ENCODE measurements at regions of chr3 and their contacts with region 1.

Region 1: GRCh38 chr3:128969993-128970739 is 23.7 kb downstream of the CFAP92 start:
- DNase-seq: peak; percentile 38 to 70 (median 57)
- H3K4me3 ChIP-seq: no peak overlapping the region
- H3K4me3 Mint-ChIP-seq: no peak overlapping the region
- H3K27ac ChIP-seq: no peak overlapping the region
- H3K27ac Mint-ChIP-seq: no peak overlapping the region
- H3K4me1 ChIP-seq: no peaks in the 10 kb centered on the region
- H3K4me1 Mint-ChIP-seq: peaks cover 5 to 6% (median 6%) of the 10 kb centered on the region in 3 donors
- H3K27me3 ChIP-seq: no peaks in the 10 kb centered on the region
- H3K27me3 Mint-ChIP-seq: no peaks in the 10 kb centered on the region

Region 2: DNA sequence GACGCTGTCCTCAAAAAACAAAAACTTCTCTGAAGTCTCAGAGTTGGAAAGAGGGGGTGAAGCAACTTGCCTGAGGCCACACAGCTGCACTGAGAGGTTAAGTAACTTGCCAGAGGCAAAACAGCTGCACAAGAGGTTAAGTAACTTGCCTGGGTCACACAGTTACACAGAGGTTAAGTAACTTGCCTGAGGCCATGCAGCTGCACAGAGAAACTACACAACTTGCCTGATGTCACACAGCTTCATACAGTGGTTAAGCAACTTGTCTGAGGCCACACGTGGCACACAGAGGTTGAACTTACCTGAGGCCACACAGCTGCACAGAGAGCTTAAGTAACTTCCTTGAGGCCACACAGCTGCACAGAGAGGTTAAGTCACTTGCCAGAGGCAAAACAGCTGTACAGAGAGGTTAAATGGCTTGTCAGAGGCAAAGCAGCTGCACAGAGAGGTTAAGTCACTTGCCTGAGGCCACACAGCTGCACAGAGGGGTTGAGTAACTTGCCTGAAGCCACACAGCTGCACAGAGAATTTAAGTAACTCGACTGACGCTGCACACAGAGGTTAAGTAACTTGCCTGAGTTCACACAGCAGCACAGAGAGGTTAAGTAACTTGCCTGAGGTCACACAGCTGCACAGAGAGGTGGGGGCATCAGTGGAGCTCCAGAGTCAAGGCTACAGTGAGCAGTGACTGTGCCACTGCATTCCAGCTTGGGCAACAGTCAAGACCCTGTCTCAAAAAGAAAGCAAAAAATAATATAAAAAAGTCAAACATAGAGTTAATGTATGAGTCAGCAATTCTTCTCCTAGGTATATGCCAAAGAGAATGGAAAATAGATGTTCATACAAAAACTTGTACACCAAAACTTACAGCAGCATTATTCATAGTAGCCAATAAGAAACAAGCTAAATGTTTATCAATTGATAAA is 102.7 kb before region 1 on chr3:
- CTCF ChIA-PET with region 1: no interaction called
- POLR2A ChIA-PET with region 1: no interaction called
- DNase-seq: no peak
- H3K4me3 ChIP-seq: no peak overlapping the region
- H3K4me3 Mint-ChIP-seq: no peak overlapping the region
- H3K27ac ChIP-seq: no peak overlapping the region
- H3K27ac Mint-ChIP-seq: no peak overlapping the region
- H3K4me1 ChIP-seq: no peaks in the 10 kb centered on the region
- H3K4me1 Mint-ChIP-seq: no peaks in the 10 kb centered on the region
- H3K27me3 ChIP-seq: no peaks in the 10 kb centered on the region
- H3K27me3 Mint-ChIP-seq: peaks cover 0 to 2% of the 10 kb centered on the region in 2 donors

Region 3: GRCh38 chr3:128993461-128994173 is 23.5 kb after region 1 on chr3 and contains the start of gene CFAP92:
- CTCF ChIA-PET with region 1: interaction called, 14 read pairs
- POLR2A ChIA-PET with region 1: no interaction called
- DNase-seq: peak; percentile 83 to 94 (median 89)
- H3K4me3 ChIP-seq: peak within 1 kb of the TSS; percentile 53
- H3K4me3 Mint-ChIP-seq: peak within 1 kb of the TSS; percentile 66 to 83 (median 77)
- H3K27ac ChIP-seq: no peak within 1 kb of the TSS
- H3K27ac Mint-ChIP-seq: peak within 1 kb of the TSS; percentile 50 to 96 (median 78)
- H3K4me1 ChIP-seq: peaks cover 23% of the 10 kb centered on the region
- H3K4me1 Mint-ChIP-seq: peaks cover 8 to 16% (median 9%) of the 10 kb centered on the region in 3 donors
- H3K27me3 ChIP-seq: no peaks in the 10 kb centered on the region
- H3K27me3 Mint-ChIP-seq: peaks cover 2 to 5% of the 10 kb centered on the region in 2 donors
- total RNA-seq, gene CFAP92: 0.13 TPM in 1 of 2 experiments, not detected in the other

Region 4: GRCh38 chr3:129016356-129016719 is 46.2 kb after region 1 on chr3:
- CTCF ChIA-PET with region 1: interaction called, 67 read pairs
- POLR2A ChIA-PET with region 1: interaction called, 6 read pairs
- DNase-seq: peak; percentile 49 to 80 (median 66)
- H3K4me3 ChIP-seq: peak overlapping the region; percentile 60
- H3K4me3 Mint-ChIP-seq: peak overlapping the region; percentile 66 to 85 (median 77)
- H3K27ac ChIP-seq: peak overlapping the region; percentile 57
- H3K27ac Mint-ChIP-seq: peak overlapping the region; percentile 82 to 100 (median 94)
- H3K4me1 ChIP-seq: peaks cover 40% of the 10 kb centered on the region
- H3K4me1 Mint-ChIP-seq: peaks cover 42 to 50% (median 48%) of the 10 kb centered on the region in 3 donors
- H3K27me3 ChIP-seq: no peaks in the 10 kb centered on the region
- H3K27me3 Mint-ChIP-seq: no peaks in the 10 kb centered on the region

Region 5: GRCh38 chr3:129052675-129053074 is 82.5 kb after region 1 on chr3:
- CTCF ChIA-PET with region 1: interaction called, 52 read pairs
- POLR2A ChIA-PET with region 1: no interaction called
- DNase-seq: no peak
- H3K4me3 ChIP-seq: no peak overlapping the region
- H3K4me3 Mint-ChIP-seq: peak overlapping the region in 1 of 7 donors; percentile 48
- H3K27ac ChIP-seq: no peak overlapping the region
- H3K27ac Mint-ChIP-seq: no peak overlapping the region
- H3K4me1 ChIP-seq: peaks cover 5% of the 10 kb centered on the region
- H3K4me1 Mint-ChIP-seq: peaks cover 5 to 8% (median 7%) of the 10 kb centered on the region in 3 donors
- H3K27me3 ChIP-seq: no peaks in the 10 kb centered on the region
- H3K27me3 Mint-ChIP-seq: peaks cover 0 to 5% of the 10 kb centered on the region in 2 donors

Region 6: GRCh38 chr3:129160891-129161859 is 191.0 kb after region 1 on chr3 and contains the start of gene ISY1:
- CTCF ChIA-PET with region 1: interaction called, 15 read pairs
- POLR2A ChIA-PET with region 1: no interaction called
- DNase-seq: peak; percentile 80 to 93 (median 91)
- H3K4me3 ChIP-seq: peak within 1 kb of the TSS; percentile 98
- H3K4me3 Mint-ChIP-seq: peak within 1 kb of the TSS; percentile 95 to 99 (median 98)
- H3K27ac ChIP-seq: peak within 1 kb of the TSS; percentile 95
- H3K27ac Mint-ChIP-seq: peak within 1 kb of the TSS; percentile 97 to 100 (median 99)
- H3K4me1 ChIP-seq: peaks cover 21% of the 10 kb centered on the region
- H3K4me1 Mint-ChIP-seq: peaks cover 31 to 53% (median 42%) of the 10 kb centered on the region in 3 donors
- H3K27me3 ChIP-seq: no peaks in the 10 kb centered on the region
- H3K27me3 Mint-ChIP-seq: peaks cover 0 to 4% of the 10 kb centered on the region in 2 donors
- total RNA-seq, gene ISY1: 84.6 to 94.7 TPM

Region 7: GRCh38 chr3:129249276-129250065 is 279.3 kb after region 1 on chr3 and contains the start of gene COPG1:
- CTCF ChIA-PET with region 1: interaction called, 143 read pairs
- POLR2A ChIA-PET with region 1: interaction called, 9 read pairs
- DNase-seq: peak; percentile 77 to 91 (median 88)
- H3K4me3 ChIP-seq: peak within 1 kb of the TSS; percentile 100
- H3K4me3 Mint-ChIP-seq: peak within 1 kb of the TSS; percentile 96 to 100 (median 97)
- H3K27ac ChIP-seq: peak within 1 kb of the TSS; percentile 97
- H3K27ac Mint-ChIP-seq: peak within 1 kb of the TSS; percentile 95 to 100 (median 98)
- H3K4me1 ChIP-seq: peaks cover 25% of the 10 kb centered on the region
- H3K4me1 Mint-ChIP-seq: peaks cover 37 to 55% (median 42%) of the 10 kb centered on the region in 3 donors
- H3K27me3 ChIP-seq: no peaks in the 10 kb centered on the region
- H3K27me3 Mint-ChIP-seq: peaks cover 0 to 2% of the 10 kb centered on the region in 2 donors
- total RNA-seq, gene COPG1: 134 to 136 TPM

Measured in CD8-positive, alpha-beta memory T cell (primary cell).